ENCODE measurements at regions of chr9 and their contacts with region 1.

Region 1: DNA sequence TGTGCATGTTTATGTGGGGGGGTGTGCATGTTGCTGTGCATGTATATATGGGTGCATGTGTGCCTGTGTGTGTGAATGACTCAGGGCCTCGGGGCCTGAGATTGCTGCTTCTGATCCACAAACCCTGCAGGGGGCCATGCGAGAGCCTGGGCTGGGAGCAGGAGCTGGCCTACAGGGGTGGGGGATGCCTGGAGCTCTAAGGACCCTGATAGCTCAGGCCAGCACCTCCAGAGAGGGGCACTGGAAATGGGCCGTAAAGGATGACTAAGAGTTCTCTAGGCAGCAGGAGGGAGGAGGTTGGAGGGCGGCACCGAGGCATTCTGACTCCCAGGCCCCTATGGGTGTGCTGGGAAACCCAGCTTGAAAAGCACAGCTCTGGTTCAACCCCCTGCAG is 6.9 kb upstream of the UBAC1 start:
- DNase-seq: no peak
- H3K4me3 ChIP-seq: no peak overlapping the region
- H3K27ac ChIP-seq: no peak overlapping the region
- H3K4me1 ChIP-seq: peaks cover 4 to 19% of the 10 kb centered on the region in 2 experiments; a peak in 2 of 4 replicates
- H3K27me3 ChIP-seq: no peaks in the 10 kb centered on the region
- CTCF ChIP-seq: no peak
- EP300 ChIP-seq: no peak
- RAD21 ChIP-seq: no peak

Region 2: DNA sequence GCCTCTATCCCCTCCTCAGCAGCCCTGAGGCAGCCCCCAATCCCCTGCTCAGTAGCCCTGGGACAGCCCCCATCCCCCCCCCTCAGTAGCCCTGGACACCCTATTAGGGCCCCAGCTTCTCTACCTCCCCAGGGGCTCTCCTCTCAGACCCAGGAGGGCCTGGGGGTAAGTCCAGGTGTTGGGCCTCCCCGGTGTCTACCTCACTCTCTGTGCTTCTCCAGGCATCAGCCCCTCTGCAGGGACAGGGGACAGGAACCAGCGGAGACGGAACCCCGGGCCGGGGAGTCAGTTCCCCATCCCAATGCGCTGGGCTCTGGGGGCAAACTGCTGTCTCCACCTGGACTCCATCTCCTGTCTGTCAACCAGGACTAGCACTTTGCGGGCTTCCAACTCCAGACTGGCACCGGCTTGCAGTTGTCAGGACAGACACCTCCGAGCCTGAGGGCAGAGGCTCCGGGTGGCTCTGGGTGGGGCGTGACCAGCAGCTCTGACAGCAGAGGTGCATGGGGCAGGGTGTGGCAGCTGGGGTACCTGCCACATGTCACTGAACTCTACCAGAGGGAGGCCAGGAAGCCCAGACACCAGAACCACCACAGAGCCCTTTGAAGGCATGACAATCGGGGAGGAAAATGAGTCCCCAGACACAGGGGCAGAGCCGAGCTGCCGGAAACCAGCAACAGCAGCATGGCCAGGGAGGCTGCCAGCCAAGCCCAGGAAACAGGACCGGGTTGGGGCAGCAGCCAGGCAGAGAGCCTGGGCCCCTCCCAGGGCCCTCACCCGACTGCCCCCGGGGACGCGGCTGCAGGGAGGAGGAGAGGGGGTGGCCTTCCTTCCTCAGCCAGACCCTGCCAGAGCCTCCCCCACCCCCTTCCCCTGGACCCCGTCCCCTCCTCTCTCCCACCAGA is 10.8 kb after region 1 on chr9:
- CTCF ChIA-PET with region 1: interaction called, 20 read pairs
- POLR2A ChIA-PET with region 1: no interaction called
- DNase-seq: peak; percentile 82
- H3K4me3 ChIP-seq: no peak overlapping the region
- H3K27ac ChIP-seq: peak overlapping the region in 1 of 2 experiments; percentile 80; a peak in 2 of 4 replicates
- H3K4me1 ChIP-seq: peaks cover 4 to 42% of the 10 kb centered on the region in 2 experiments; a peak in 2 of 4 replicates
- H3K27me3 ChIP-seq: peaks cover 9% of the 10 kb centered on the region; the same call in 1 of the 2 replicates
- CTCF ChIP-seq: no peak
- EP300 ChIP-seq: no peak
- RAD21 ChIP-seq: no peak

Region 3: GRCh38 chr9:135986605-135987004 is 18.5 kb after region 1 on chr9:
- CTCF ChIA-PET with region 1: interaction called, 22 read pairs
- POLR2A ChIA-PET with region 1: interaction called, 3 read pairs
- DNase-seq: no peak
- H3K4me3 ChIP-seq: no peak overlapping the region
- H3K27ac ChIP-seq: no peak overlapping the region
- H3K4me1 ChIP-seq: peaks cover 5 to 43% of the 10 kb centered on the region in 2 experiments; a peak in 2 of 4 replicates
- H3K27me3 ChIP-seq: peaks cover 9% of the 10 kb centered on the region; the same call in 1 of the 2 replicates
- CTCF ChIP-seq: no peak
- EP300 ChIP-seq: no peak
- RAD21 ChIP-seq: no peak

Region 4: DNA sequence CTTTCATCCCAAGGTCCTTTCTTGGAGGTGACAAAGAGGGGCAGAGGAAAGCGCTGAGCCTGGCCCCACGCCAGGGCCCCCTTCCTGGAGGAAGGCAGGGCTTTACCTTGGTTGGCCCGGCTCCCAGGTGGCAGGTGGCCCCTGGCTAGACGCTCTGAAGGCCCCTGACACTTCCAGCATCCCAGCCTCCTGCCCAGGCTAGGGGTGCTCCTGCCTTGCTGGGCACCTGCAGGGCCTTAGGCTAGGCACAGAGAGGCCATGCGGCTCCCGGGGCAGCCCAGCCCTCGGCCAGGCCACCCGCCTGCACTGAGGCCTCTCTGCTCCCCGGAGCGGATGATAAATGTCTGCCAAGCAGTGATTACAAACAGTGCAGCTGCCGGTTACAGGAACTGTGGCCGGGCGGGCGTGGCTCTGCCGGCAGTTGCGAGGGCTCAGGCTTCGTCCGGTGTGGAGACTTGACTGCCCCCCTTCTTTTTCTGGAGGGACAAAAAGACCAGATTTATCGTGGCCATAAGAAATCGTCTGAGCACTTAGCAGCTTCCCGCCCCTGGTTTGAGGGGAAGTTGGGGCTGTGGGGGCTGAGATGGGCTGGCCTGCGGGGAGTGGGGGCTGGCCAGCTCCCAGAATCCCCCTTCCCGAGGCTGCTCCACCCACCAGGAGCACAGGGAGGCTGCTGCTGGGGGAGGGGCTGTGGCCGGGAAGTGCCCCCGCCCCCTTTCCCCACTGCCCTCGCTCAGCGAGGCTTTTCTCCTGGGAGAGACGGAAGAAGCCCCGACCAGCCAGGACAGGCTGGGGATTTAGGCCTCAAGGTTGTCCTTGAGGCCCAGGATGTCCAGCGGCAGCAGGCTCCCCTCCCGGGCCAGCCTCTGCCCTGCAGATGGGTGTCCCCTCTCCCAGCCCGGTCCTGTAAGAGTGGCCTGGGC is 24.7 kb after region 1 on chr9:
- CTCF ChIA-PET with region 1: interaction called, 22 read pairs
- POLR2A ChIA-PET with region 1: interaction called, 3 read pairs
- DNase-seq: peak; percentile 89
- H3K4me3 ChIP-seq: peak overlapping the region; percentile 42 to 56
- H3K27ac ChIP-seq: peak overlapping the region; percentile 69 to 99
- H3K4me1 ChIP-seq: peaks cover 16 to 72% of the 10 kb centered on the region in 2 experiments; a peak in 3 of 4 replicates
- H3K27me3 ChIP-seq: no peaks in the 10 kb centered on the region
- CTCF ChIP-seq: no peak
- EP300 ChIP-seq: no peak; a peak in 2 of 4 replicates
- RAD21 ChIP-seq: no peak

Region 5: DNA sequence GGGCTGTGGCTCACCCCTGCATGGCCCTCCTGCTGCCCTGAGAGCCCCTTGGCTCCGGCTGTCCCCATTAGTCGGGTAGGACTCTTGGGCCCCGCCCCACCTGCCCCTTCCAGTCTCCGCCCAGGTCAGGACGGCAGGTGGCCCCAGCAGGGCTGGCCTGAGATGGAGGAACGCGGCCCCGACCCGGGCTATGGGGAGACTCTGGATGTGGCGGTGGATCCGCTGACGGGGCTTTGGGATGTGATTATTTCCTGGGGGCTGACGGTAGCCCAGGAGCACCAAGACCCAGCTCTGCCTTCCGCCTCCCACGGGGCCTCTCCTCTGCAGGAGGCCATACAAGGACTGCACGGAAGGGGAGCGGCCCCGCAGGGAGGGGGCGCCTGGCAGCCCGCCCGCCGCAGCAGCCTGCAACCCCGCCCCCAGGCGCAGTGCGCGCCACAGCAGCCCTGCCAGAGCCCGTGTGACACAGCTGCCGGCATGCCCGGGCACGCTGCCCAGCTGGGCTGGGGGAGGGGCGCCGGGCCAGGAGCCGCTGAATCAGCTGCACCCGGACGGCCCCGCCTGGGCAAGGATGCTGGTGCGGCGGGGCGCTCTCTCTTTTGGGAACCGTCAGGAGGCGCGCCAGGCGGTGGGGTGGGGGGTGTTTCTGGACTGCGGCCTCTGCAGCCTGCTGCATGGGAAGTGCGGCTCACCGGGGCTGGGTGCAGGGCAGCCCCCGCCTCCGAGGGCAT is 141.4 kb after region 1 on chr9:
- CTCF ChIA-PET with region 1: interaction called, 21 read pairs
- POLR2A ChIA-PET with region 1: no interaction called
- DNase-seq: peak; percentile 96
- H3K4me3 ChIP-seq: peak overlapping the region; percentile 29 to 43; a peak in 3 of 4 replicates
- H3K27ac ChIP-seq: peak overlapping the region; percentile 40 to 79; a peak in 3 of 4 replicates
- H3K4me1 ChIP-seq: peaks cover 36 to 52% of the 10 kb centered on the region in 2 experiments; a peak in 3 of 4 replicates
- H3K27me3 ChIP-seq: no peaks in the 10 kb centered on the region
- CTCF ChIP-seq: no peak
- EP300 ChIP-seq: peak; percentile 56 to 66; a peak in 2 of 4 replicates
- RAD21 ChIP-seq: peak; percentile 21